ENCODE measurements at regions of chr2 and their contacts with region 1.

Region 1: DNA sequence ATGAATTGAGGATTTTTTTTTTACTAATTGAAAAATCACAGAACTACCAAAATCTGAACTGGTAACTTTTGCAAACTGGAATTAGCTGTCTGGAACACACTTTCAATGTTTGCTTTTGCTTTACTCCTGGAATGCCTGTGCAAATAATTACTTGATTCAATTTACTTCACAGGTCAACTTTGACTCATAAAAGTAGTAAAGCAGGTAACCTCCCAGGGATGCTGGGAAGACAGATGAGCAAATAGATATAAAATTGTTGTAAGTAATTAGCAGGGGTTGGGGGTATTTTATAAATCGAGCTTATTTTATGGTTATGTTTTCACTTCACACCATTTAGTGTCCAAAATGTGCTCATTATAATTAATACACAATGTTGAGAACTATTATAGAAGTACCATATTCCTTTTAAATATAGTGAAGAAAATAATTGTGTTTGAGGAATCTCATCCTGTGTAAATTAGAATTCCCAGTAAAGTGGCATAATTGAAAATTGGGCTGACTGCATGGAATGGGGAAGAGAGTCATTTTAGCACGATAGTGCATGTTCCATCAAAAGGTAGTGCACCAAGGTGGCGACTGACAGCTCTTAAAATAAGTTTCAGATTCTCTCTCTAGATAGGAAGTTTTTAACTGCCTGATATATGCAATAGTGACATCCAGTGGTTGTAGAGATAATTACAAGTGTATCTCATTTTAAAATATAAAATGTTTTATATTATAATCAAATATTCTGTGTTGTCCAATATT is 398.1 kb upstream of the HNRNPA3 start:
- DNase-seq: no peak
- H3K4me3 ChIP-seq: no peak overlapping the region
- CTCF ChIP-seq: peak; percentile 12

Region 2: GRCh38 chr2:176110975-176111663 is 703.4 kb before region 1 on chr2:
- CTCF ChIA-PET with region 1: interaction called, 12 read pairs
- POLR2A ChIA-PET with region 1: no interaction called
- DNase-seq: no peak
- H3K4me3 ChIP-seq: no peak overlapping the region
- CTCF ChIP-seq: peak; percentile 85

Region 3: DNA sequence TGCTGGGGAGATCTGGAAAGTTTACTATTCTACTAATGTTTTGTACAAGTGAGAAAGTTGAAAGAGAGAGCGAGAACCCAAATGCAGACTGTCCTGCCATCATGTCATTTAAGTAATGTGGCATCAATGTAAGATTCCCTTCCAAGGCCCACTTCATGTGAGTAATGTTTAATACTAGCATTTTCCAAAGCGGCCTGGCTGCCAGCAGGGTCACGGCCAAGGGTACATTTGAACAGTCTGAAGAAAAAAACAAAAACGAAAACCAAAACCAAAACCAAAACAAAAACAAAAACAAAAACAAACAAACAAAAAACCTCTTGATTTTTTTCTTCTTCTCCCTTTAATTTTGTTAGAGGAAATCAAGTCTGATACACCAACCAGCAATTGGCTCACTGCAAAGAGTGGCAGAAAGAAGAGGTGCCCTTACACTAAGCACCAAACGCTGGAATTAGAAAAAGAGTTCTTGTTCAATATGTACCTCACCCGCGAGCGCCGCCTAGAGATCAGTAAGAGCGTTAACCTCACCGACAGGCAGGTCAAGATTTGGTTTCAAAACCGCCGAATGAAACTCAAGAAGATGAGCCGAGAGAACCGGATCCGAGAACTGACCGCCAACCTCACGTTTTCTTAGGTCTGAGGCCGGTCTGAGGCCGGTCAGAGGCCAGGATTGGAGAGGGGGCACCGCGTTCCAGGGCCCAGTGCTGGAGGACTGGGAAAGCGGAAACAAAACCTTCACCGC is 695.7 kb before region 1 on chr2:
- CTCF ChIA-PET with region 1: interaction called, 14 read pairs
- POLR2A ChIA-PET with region 1: no interaction called
- DNase-seq: no peak
- H3K4me3 ChIP-seq: no peak overlapping the region
- CTCF ChIP-seq: peak; percentile 23

Region 4: GRCh38 chr2:176126929-176127773 is 687.3 kb before region 1 on chr2:
- CTCF ChIA-PET with region 1: interaction called, 98 read pairs
- POLR2A ChIA-PET with region 1: no interaction called
- DNase-seq: no peak
- H3K4me3 ChIP-seq: peak overlapping the region; percentile 13
- CTCF ChIP-seq: peak; percentile 57

Region 5: DNA sequence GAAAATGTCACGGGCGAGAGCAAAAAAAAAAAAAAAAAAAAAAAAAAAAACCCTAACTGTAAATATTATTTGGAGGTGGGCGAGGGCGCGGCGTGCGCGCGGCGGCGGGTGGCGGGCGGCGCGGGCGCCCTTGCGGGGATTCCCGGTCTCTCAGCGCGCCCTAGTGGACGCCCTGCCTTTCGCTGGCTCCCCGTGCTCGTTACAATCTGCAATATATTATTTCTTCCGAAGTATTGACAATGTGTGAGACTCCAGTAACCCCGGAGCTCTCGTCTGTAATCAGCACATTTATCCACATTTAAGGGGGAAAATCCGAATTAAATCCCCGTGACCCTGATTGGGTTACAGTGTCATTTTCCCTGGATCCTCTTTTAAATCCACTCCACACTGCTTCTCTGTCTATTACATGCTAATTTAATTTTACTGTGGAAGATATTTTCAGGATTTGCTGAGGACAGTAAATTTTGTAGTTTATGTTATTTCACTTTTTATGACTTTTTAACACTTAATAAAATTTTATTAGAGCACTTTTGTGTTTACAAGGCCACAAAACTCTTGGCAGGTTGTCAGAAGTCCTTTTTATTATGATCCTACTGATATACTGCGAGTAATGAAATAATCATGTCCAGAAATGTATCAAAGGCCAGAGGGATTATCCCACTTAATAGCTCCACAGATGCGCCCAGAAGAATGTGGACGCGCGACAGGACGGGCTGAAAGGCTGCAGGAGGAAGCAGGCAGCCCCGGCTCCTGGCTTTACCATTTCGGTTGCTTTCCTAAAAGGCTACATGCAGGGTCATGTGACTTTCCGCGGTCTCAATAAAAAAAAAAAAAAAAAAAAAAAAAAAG is 176.1 kb before region 1 on chr2:
- CTCF ChIA-PET with region 1: interaction called, 11 read pairs
- POLR2A ChIA-PET with region 1: interaction called, 3 read pairs
- DNase-seq: no peak
- H3K4me3 ChIP-seq: peak overlapping the region; percentile 66
- CTCF ChIP-seq: peak; percentile 67

Region 6: GRCh38 chr2:176781570-176782217 is 32.8 kb before region 1 on chr2:
- CTCF ChIA-PET with region 1: no interaction called
- POLR2A ChIA-PET with region 1: no interaction called
- DNase-seq: no peak
- H3K4me3 ChIP-seq: no peak overlapping the region
- CTCF ChIP-seq: no peak

Region 7: DNA sequence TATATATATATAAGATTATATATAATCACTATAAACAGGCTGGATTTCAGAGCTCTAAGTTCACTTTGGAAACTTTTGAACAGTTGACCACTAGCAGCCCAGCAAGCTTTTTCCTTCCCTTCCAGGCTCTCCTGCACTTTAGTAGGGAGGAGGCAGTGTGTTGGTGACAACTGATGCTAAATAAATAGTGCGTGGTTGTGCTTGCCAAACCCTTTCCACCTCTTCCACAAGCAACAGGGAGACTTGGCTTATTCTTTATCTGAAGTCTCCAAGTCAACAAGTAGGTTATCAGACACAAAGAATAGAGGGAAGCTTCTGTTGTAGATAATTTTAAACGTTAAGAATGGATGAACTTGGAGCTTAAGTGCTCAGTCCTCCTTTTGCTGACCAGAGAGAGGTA is 10.1 kb before region 1 on chr2:
- CTCF ChIA-PET with region 1: interaction called, 16 read pairs
- POLR2A ChIA-PET with region 1: no interaction called
- DNase-seq: no peak
- H3K4me3 ChIP-seq: no peak overlapping the region
- CTCF ChIP-seq: no peak

Region 8: DNA sequence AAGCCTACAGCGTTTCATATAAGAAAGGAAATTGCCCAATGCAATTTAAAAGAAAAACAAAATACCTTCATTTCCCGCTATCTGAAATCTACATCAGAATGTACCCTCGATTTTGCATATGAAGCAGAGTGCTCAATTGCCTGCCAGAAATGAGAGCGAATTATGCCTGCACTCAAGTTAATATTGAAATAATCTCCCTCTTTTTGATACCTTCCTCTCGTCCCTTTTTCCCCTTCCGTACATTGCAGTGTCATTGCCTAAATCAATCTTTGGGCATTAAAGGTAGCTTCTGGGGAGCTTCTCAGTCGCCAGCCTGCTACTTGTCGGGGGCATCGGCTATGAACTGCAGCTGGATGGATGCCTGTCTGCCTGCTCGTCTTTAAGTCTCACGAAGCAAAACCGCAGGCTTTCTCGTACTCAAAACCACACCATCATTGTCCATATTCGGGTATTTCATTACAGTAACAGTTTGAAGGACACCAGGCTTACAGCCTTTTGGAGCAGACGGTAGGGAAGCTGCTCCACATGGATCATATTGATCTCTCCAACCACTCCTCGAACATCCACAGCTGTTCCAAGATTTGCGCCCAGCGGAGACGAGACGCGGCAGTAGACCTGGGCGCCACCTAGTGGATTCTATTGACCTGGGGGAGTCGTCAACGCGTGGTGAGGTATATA is 334.1 kb after region 1 on chr2:
- CTCF ChIA-PET with region 1: interaction called, 21 read pairs
- POLR2A ChIA-PET with region 1: no interaction called
- DNase-seq: no peak
- H3K4me3 ChIP-seq: peak overlapping the region; percentile 54
- CTCF ChIP-seq: peak; percentile 91

Measured in AG04449 (cell line).